CD8-positive, alpha-beta T cell (primary cell): ENCODE measurements at regions of chr22 and their contacts with region 1.

Region 1: DNA sequence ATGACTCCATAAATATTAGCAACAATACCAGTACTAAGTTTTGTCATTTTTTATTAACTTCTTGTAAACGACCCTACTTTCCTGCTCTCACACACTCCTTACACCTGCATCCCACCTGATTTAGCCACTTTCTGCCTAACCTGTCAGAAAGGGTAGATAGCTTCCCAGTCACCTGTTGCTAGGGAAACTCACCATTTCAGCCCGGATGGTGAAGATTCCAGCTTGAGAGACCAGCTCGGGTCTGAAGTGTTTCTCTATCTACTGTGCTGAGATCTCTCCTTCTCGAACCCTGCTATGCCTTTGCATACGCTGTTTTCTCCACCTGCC is at the start of gene PARVG:
- DNase-seq: peak; percentile 10 to 84 (median 44)
- ATAC-seq: peak; percentile 43
- H3K4me3 ChIP-seq: peak within 1 kb of the TSS; percentile 79 to 86
- H3K4me3 Mint-ChIP-seq: peak within 1 kb of the TSS; percentile 84
- H3K27ac ChIP-seq: peak within 1 kb of the TSS; percentile 73 to 81
- H3K27ac Mint-ChIP-seq: peak within 1 kb of the TSS; percentile 97
- H3K4me1 ChIP-seq: peaks cover 22% of the 10 kb centered on the region
- H3K4me1 Mint-ChIP-seq: peaks cover 34% of the 10 kb centered on the region
- H3K27me3 ChIP-seq: no peaks in the 10 kb centered on the region
- H3K27me3 Mint-ChIP-seq: no peaks in the 10 kb centered on the region
- CTCF ChIP-seq: no peak
- total RNA-seq, gene PARVG: 122 to 124 TPM

Region 2: DNA sequence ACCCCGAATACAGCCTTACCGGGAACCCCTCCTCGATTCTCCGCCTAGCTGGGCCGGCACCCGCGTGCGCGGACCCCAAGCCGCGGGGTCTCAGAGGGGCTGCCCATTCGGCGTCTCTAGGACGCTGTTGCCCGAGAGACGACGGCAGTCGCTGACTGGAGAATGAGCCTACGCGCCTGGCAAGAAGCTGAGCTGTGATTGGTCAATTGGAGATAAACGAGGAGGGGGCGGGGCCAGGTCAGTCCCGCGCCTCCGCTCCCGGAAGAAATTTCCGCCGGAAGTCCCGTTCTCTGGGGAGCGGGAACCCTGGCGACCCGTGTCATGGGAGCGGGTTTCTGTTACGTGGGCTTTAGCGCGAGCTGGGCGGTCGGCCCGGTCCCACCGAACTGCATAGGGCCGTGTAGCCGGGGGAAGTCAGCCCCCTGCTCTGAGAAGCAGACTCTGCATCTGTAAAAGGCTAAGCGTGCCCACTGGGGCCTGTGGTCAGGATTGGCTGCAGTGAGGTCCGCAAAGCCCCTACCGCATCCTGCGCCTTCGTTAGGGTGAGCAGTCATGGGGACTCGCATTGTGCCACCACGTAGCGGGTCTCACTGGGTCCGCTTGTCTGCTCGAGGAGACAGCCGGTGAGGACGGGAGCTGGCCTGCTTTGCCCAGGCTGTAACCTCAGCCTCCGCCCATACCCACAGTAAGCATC is 368.4 kb before region 1 on chr22 and contains the start of gene EFCAB6:
- CTCF ChIA-PET with region 1: no interaction called
- POLR2A ChIA-PET with region 1: no interaction called
- intact Hi-C with region 1: loop called in 1 of 2 experiments (anchors 10 kb)
- DNase-seq: peak; percentile 69 to 96 (median 90)
- ATAC-seq: peak; percentile 91
- H3K4me3 ChIP-seq: peak within 1 kb of the TSS; percentile 84 to 92
- H3K4me3 Mint-ChIP-seq: peak within 1 kb of the TSS; percentile 95
- H3K27ac ChIP-seq: peak within 1 kb of the TSS; percentile 46 to 78
- H3K27ac Mint-ChIP-seq: peak within 1 kb of the TSS; percentile 85
- H3K4me1 ChIP-seq: peaks cover 15% of the 10 kb centered on the region
- H3K4me1 Mint-ChIP-seq: peaks cover 27% of the 10 kb centered on the region
- H3K27me3 ChIP-seq: no peaks in the 10 kb centered on the region
- H3K27me3 Mint-ChIP-seq: peaks cover 2% of the 10 kb centered on the region
- CTCF ChIP-seq: no peak
- total RNA-seq, gene EFCAB6: 0.22 TPM in 1 of 2 experiments, not detected in the other

Region 3: DNA sequence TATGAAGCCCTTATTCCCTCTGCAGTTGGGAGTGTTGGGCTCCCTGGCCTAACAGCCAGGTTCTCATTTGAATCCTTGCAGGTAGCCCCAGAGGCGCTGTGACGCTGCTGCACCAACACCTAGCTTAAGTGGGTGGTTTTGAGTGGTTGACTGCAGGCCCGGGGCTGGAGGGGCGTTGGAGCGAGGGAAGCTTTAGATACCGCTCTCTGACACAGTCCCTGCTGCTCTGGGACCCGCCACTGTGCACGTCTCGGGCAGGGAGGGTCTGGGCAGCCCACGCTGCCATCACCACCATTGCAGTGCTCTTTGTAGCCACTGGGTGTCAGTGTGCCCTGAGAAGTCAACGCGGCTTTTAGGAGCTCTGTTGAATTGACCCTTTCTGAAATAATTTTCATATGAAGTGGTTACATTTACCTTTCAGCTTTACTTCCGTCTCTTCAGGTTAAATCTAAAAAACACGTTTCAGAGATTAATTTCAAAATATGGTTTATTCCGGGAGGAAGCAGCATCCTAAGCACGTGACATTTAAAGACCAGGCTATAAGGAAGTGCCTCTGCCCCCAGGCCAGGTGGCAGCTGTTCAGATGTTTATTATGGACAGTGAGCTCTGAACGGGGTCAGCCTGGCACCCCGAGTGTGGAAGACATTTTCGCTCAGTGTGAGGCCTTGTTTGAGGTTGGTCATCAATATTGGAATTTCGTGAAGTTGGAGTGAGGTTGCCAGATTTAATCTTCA is 187.5 kb before region 1 on chr22:
- CTCF ChIA-PET with region 1: no interaction called
- POLR2A ChIA-PET with region 1: no interaction called
- intact Hi-C with region 1: loop called in 1 of 2 experiments (anchors 5 kb)
- DNase-seq: peak; percentile 30 to 79 (median 61)
- ATAC-seq: peak; percentile 72
- H3K4me3 ChIP-seq: no peak overlapping the region
- H3K4me3 Mint-ChIP-seq: no peak overlapping the region
- H3K27ac ChIP-seq: no peak overlapping the region
- H3K27ac Mint-ChIP-seq: no peak overlapping the region
- H3K4me1 ChIP-seq: peaks cover 15% of the 10 kb centered on the region
- H3K4me1 Mint-ChIP-seq: peaks cover 27% of the 10 kb centered on the region
- H3K27me3 ChIP-seq: no peaks in the 10 kb centered on the region
- H3K27me3 Mint-ChIP-seq: no peaks in the 10 kb centered on the region
- CTCF ChIP-seq: peak; percentile 95

Region 4: DNA sequence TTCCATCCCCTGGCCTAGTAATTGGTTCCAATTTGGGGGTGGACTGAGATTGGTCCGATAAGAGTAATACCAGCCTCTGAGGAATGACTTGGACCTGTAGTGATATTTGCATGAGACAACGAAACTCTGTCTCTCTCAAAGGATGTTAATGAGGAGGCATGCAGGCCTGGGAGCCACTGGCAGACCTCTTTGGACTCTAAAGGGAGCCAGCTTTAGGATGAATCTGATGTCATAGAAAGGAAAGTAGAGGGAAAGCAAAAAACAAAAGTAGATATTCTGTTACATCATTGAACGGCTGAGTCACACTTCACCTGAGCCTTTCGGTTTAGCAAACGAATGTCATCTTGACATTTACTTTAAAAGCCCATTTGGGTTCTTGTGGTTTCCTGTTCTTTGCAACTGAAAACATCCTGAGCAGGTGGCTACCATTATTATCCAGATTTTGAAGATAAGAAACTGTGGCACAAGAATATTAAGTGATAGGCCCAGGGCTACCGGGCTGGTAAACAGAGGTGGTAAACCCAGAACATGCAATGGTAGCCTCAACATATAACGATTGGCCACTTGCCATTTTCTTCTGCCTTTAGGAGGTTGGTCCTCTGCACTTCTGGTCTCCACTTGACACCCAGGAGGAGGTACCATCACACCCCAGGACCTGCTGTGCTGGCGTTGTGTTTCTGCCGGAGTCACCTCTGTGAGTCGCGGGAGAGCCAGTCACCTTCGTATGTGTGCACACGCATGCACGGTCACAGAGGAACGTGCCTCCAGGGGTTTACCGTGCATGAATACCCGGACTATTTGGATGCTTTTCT is 274.7 kb after region 1 on chr22:
- CTCF ChIA-PET with region 1: no interaction called
- POLR2A ChIA-PET with region 1: no interaction called
- intact Hi-C with region 1: loop called in 1 of 2 experiments (anchors 1 kb)
- DNase-seq: peak; percentile 19 to 87 (median 58)
- ATAC-seq: peak; percentile 75
- H3K4me3 ChIP-seq: peak overlapping the region in 1 of 2 experiments; percentile 0
- H3K4me3 Mint-ChIP-seq: peak overlapping the region; percentile 43
- H3K27ac ChIP-seq: peak overlapping the region; percentile 33 to 78
- H3K27ac Mint-ChIP-seq: peak overlapping the region; percentile 91
- H3K4me1 ChIP-seq: peaks cover 23% of the 10 kb centered on the region
- H3K4me1 Mint-ChIP-seq: peaks cover 27% of the 10 kb centered on the region
- H3K27me3 ChIP-seq: no peaks in the 10 kb centered on the region
- H3K27me3 Mint-ChIP-seq: no peaks in the 10 kb centered on the region
- CTCF ChIP-seq: no peak

Region 5: DNA sequence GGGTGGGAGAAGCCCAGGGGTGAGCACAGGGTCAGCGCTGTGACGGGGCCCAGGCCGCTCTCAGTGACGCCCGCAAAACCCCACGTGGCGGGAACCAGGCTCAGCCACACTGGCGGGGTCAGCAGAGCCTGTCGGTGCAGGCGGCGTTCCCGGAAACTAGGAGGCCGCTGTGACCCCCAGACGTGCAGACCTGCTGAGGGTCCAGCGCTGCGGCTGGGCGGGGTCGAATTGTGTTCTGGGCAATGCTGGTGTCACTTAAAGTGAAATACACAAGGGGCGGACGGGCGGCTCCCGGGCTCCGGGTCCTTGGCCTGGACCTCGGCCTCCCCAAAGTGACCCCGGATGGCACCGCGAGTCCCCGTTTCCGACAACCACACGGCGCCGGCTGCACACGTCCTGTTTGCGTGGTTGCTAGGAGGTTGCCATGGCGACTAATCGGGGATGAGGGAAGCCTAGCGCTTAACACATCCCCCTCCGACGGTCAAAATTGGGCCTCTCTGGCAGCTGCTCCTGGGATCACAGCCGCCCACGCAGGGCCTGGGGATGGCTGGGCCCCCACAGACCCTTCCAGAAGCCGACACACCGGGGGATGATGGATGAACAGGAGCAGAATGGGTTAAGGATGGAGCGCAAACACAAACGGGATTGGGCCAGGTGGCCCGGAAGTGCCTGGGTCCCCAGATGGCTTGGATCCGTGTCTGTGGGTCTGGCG is 439.6 kb after region 1 on chr22:
- CTCF ChIA-PET with region 1: no interaction called
- POLR2A ChIA-PET with region 1: no interaction called
- intact Hi-C with region 1: loop called (anchors 1 to 10 kb)
- DNase-seq: peak; percentile 80 to 96 (median 90)
- ATAC-seq: peak; percentile 83
- H3K4me3 ChIP-seq: peak overlapping the region; percentile 44 to 47
- H3K4me3 Mint-ChIP-seq: no peak overlapping the region
- H3K27ac ChIP-seq: peak overlapping the region; percentile 58 to 65
- H3K27ac Mint-ChIP-seq: no peak overlapping the region
- H3K4me1 ChIP-seq: peaks cover 22% of the 10 kb centered on the region
- H3K4me1 Mint-ChIP-seq: peaks cover 7% of the 10 kb centered on the region
- H3K27me3 ChIP-seq: peaks cover 0 to 8% of the 10 kb centered on the region in 2 experiments
- H3K27me3 Mint-ChIP-seq: no peaks in the 10 kb centered on the region
- CTCF ChIP-seq: no peak

Region 6: GRCh38 chr22:44664149-44664548 is 483.5 kb after region 1 on chr22:
- CTCF ChIA-PET with region 1: no interaction called
- POLR2A ChIA-PET with region 1: no interaction called
- intact Hi-C with region 1: loop called (anchors 5 to 10 kb)
- DNase-seq: peak in 8 of 9 experiments; percentile 47 to 83 (median 62)
- ATAC-seq: no peak
- H3K4me3 ChIP-seq: no peak overlapping the region
- H3K4me3 Mint-ChIP-seq: peak overlapping the region; percentile 50
- H3K27ac ChIP-seq: peak overlapping the region; percentile 10 to 70
- H3K27ac Mint-ChIP-seq: peak overlapping the region; percentile 90
- H3K4me1 ChIP-seq: peaks cover 65% of the 10 kb centered on the region
- H3K4me1 Mint-ChIP-seq: peaks cover 58% of the 10 kb centered on the region
- H3K27me3 ChIP-seq: no peaks in the 10 kb centered on the region
- H3K27me3 Mint-ChIP-seq: no peaks in the 10 kb centered on the region
- CTCF ChIP-seq: no peak

Region 7: DNA sequence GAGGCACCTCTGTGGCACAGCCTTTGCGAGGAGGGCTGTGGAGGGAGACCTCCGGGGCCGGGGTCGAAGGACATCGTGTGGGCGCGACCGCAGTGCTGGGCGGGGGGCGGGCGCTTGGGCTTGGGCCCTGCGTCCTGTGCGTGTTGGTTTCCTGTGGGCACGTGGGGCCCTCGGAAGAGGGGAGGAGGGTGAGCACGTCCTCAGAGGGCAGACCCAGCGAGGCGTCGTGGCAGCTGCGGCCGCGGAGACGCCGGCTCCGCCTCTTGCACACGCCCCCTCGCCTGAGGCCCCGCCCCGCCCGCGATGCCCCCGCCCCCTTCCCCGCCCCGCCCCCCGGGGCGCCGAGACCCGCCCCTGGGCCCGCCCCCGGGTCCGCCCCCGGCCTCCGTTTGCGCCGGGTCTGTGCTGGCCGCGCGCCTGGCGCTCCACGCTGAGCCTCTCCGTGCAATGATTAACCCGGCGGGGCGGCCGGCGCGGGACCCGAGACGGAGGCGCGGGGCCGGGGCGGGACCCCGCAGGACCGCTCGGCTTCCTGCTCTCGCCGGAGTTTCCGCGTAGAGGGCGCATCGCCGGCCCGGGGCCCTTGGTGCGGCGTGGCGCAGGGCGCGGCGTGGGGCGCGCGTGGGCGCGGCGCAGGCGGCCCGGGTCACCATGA is 521.3 kb after region 1 on chr22 and contains the start of gene PRR5:
- CTCF ChIA-PET with region 1: no interaction called
- POLR2A ChIA-PET with region 1: no interaction called
- intact Hi-C with region 1: loop called in 1 of 2 experiments (anchors 10 kb)
- DNase-seq: peak; percentile 57 to 94 (median 83)
- ATAC-seq: peak; percentile 89
- H3K4me3 ChIP-seq: peak within 1 kb of the TSS; percentile 60 to 76
- H3K4me3 Mint-ChIP-seq: peak within 1 kb of the TSS; percentile 84
- H3K27ac ChIP-seq: peak within 1 kb of the TSS; percentile 61 to 77
- H3K27ac Mint-ChIP-seq: peak within 1 kb of the TSS; percentile 86
- H3K4me1 ChIP-seq: peaks cover 50% of the 10 kb centered on the region
- H3K4me1 Mint-ChIP-seq: peaks cover 46% of the 10 kb centered on the region
- H3K27me3 ChIP-seq: no peaks in the 10 kb centered on the region
- H3K27me3 Mint-ChIP-seq: no peaks in the 10 kb centered on the region
- CTCF ChIP-seq: no peak
- total RNA-seq, gene PRR5: 47.6 to 49.3 TPM